Panc1 (cell line): ENCODE measurements at regions of chr9 and their contacts with region 1.

Region 1: DNA sequence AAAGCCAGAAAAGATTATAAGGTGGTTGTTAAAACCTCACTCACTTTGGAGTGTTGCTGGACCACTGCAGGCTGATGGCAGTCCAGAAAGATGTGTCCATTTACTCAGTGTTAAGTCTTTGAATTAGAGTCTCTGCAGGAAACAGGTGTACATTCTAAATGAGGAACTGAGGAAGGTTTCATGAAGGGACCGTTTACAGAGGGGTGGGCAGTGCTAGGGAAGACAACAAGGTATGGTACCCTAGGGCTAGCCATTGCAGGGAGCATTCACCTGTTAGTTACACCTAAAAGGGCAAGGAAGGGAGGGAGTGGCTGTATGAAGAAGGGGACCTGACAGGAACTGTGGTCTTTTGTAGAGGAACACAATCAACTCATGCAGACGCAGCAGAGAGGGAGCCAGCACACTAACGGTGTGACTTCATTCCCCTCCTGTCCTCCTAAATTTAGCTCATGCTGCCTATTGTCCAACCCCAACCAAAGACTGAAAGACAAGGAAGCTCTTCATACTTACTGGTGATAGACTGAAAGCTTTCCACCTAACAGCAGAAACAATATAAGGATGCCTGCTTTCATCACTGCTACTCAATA is 32.2 kb upstream of the PAX5 start:
- DNase-seq: no peak
- ATAC-seq: no peak
- H3K4me3 ChIP-seq: no peak overlapping the region
- H3K27ac ChIP-seq: no peak overlapping the region
- H3K4me1 ChIP-seq: no peaks in the 10 kb centered on the region
- H3K27me3 ChIP-seq: peaks cover 30% of the 10 kb centered on the region
- CTCF ChIP-seq: no peak

Region 2: GRCh38 chr9:37100327-37100726 is 34.1 kb after region 1 on chr9:
- CTCF ChIA-PET with region 1: interaction called, 10 read pairs
- POLR2A ChIA-PET with region 1: no interaction called
- in situ Hi-C with region 1: no loop called
- intact Hi-C with region 1: no loop called
- DNase-seq: no peak
- ATAC-seq: peak; percentile 41; the same call in 1 of the 2 replicates
- H3K4me3 ChIP-seq: no peak overlapping the region
- H3K27ac ChIP-seq: no peak overlapping the region
- H3K4me1 ChIP-seq: no peaks in the 10 kb centered on the region
- H3K27me3 ChIP-seq: no peaks in the 10 kb centered on the region
- CTCF ChIP-seq: no peak